ENCODE measurements at regions of chr1 and their contacts with region 1.

Region 1: DNA sequence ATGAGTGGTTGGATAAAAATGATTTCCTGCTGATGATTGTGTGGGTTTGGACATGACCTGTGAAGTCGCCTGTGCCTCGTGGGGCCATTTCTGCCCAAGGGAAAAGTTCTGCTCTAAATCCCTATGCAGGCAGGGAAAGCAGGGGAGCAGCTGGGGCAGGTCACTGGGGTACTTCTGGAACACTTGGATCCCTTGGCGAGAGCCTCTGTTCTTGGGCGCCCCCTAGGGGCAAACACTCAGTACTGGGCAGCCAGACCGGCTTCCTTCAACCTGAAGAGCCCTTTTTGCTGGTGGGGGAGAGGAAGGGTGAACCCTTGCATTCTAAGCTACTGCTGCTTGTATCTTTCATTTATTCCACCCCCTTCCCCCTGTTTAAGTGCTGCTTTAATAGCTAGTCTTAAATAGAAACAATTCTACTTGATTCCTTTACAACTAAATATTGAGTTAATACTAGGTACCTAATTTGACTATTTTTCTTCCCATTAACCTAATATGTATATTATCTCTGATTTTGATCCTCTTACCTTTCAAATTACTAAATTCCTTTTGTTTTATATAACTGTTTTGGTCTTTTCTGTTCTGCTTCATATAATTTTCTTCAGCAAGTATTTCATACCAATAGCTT is 5.1 kb upstream of the CLEC20A start:
- DNase-seq: peak; percentile 43
- H3K4me3 ChIP-seq: no peak overlapping the region
- H3K27ac ChIP-seq: no peak overlapping the region
- H3K4me1 ChIP-seq: no peaks in the 10 kb centered on the region
- H3K27me3 ChIP-seq: no peaks in the 10 kb centered on the region
- CTCF ChIP-seq: peak; percentile 95 to 98

Region 2: GRCh38 chr1:177959811-177960515 is 541.9 kb before region 1 on chr1:
- CTCF ChIA-PET with region 1: no interaction called
- dilution Hi-C with region 1: no loop called
- in situ Hi-C with region 1: loop called in 1 of 2 experiments (anchors 25 kb)
- intact Hi-C with region 1: loop called (anchors 2 kb)
- DNase-seq: peak; percentile 33
- H3K4me3 ChIP-seq: no peak overlapping the region
- H3K27ac ChIP-seq: no peak overlapping the region
- H3K4me1 ChIP-seq: no peaks in the 10 kb centered on the region
- H3K27me3 ChIP-seq: no peaks in the 10 kb centered on the region
- CTCF ChIP-seq: peak; percentile 44 to 53

Region 3: DNA sequence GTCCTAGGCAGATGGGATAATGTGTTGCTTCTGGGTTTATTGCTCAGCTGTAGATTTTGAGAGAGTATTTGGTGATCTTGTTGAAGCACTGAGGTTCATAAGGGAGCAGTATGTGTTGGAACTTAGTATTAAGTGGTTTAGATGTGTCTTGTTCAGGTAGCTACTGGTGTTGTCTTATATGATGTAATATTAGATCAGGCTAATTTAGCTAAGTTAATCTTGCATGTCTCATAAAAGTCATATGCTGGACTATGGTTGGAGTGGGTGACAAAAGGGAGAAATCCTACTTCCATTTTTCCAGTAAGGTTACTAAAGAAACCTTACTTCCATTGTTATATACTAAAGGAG is 201.5 kb before region 1 on chr1:
- CTCF ChIA-PET with region 1: interaction called, 10 read pairs
- dilution Hi-C with region 1: no loop called
- in situ Hi-C with region 1: loop called (anchors 10 to 25 kb)
- intact Hi-C with region 1: loop called (anchors 1 kb)
- DNase-seq: no peak
- H3K4me3 ChIP-seq: no peak overlapping the region
- H3K27ac ChIP-seq: peak overlapping the region; percentile 47
- H3K4me1 ChIP-seq: peaks cover 10% of the 10 kb centered on the region
- H3K27me3 ChIP-seq: no peaks in the 10 kb centered on the region
- CTCF ChIP-seq: no peak

Region 4: GRCh38 chr1:178310685-178311105 is 191.1 kb before region 1 on chr1:
- CTCF ChIA-PET with region 1: no interaction called
- dilution Hi-C with region 1: no loop called
- in situ Hi-C with region 1: loop called (anchors 10 to 25 kb)
- intact Hi-C with region 1: loop called (anchors 2 kb)
- DNase-seq: peak; percentile 74
- H3K4me3 ChIP-seq: no peak overlapping the region
- H3K27ac ChIP-seq: peak overlapping the region; percentile 51
- H3K4me1 ChIP-seq: peaks cover 3% of the 10 kb centered on the region
- H3K27me3 ChIP-seq: no peaks in the 10 kb centered on the region
- CTCF ChIP-seq: peak; percentile 66 to 74

Region 5: DNA sequence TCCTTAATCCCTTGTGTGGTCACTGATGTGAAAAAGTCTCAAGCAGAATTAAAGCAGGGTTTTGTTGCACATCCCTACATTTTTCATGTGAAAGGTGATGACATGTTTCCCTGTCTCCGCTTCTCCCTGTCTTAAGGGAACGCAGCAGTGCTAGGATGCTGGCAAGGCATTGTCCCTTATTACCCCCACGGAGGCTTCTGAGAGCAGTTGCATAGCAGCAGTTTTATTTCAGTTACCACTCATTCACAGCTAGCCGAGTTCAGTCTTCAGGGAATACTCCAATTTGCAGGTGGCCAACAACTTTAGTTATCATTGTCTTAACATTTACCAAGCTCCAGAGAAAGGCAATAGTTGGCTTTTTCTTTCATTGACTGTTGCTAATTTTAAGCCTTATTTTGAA is 94.2 kb before region 1 on chr1:
- CTCF ChIA-PET with region 1: no interaction called
- dilution Hi-C with region 1: loop called (anchors 5 kb)
- in situ Hi-C with region 1: no loop called
- intact Hi-C with region 1: no loop called
- DNase-seq: no peak
- H3K4me3 ChIP-seq: no peak overlapping the region
- H3K27ac ChIP-seq: no peak overlapping the region
- H3K4me1 ChIP-seq: no peaks in the 10 kb centered on the region
- H3K27me3 ChIP-seq: no peaks in the 10 kb centered on the region
- CTCF ChIP-seq: no peak

Measured in mammary epithelial cell (primary cell).